Naive thymus-derived CD4-positive, alpha-beta T cell (primary cell): ENCODE measurements at regions of chr9 and their contacts with region 1.

Region 1: GRCh38 chr9:4553951-4554381 is 63.7 kb downstream of the SLC1A1 start:
- DNase-seq: no peak
- ATAC-seq: no peak
- H3K4me3 ChIP-seq: no peak overlapping the region
- H3K4me3 Mint-ChIP-seq: peak overlapping the region in 5 of 10 donors; percentile 29 to 53 (median 39)
- H3K27ac ChIP-seq: no peak overlapping the region
- H3K27ac Mint-ChIP-seq: peak overlapping the region in 5 of 9 donors; percentile 16 to 94 (median 63)
- H3K4me1 ChIP-seq: peaks cover 0 to 33% of the 10 kb centered on the region in 2 donors
- H3K4me1 Mint-ChIP-seq: peaks cover 15 to 75% (median 55%) of the 10 kb centered on the region in 7 donors
- H3K27me3 ChIP-seq: no peaks in the 10 kb centered on the region
- H3K27me3 Mint-ChIP-seq: no peaks in the 10 kb centered on the region

Region 2: GRCh38 chr9:4413856-4414455 is 140.0 kb before region 1 on chr9:
- CTCF ChIA-PET with region 1: no interaction called
- POLR2A ChIA-PET with region 1: no interaction called
- intact Hi-C with region 1: no loop called
- DNase-seq: no peak
- ATAC-seq: no peak
- H3K4me3 ChIP-seq: no peak overlapping the region
- H3K4me3 Mint-ChIP-seq: no peak overlapping the region
- H3K27ac ChIP-seq: no peak overlapping the region
- H3K27ac Mint-ChIP-seq: no peak overlapping the region
- H3K4me1 ChIP-seq: no peaks in the 10 kb centered on the region
- H3K4me1 Mint-ChIP-seq: no peaks in the 10 kb centered on the region
- H3K27me3 ChIP-seq: no peaks in the 10 kb centered on the region
- H3K27me3 Mint-ChIP-seq: peaks cover 0 to 4% (median 0%) of the 10 kb centered on the region in 5 donors

Region 3: GRCh38 chr9:4489919-4490704 is 63.9 kb before region 1 on chr9 and contains the start of gene SLC1A1:
- CTCF ChIA-PET with region 1: no interaction called
- POLR2A ChIA-PET with region 1: no interaction called
- intact Hi-C with region 1: loop called in 1 of 2 experiments (anchors 5 kb)
- DNase-seq: peak in 8 of 9 donors; percentile 8 to 36 (median 28)
- ATAC-seq: peak; percentile 50
- H3K4me3 ChIP-seq: peak within 1 kb of the TSS; percentile 70
- H3K4me3 Mint-ChIP-seq: peak within 1 kb of the TSS; percentile 72 to 92 (median 86)
- H3K27ac ChIP-seq: no peak within 1 kb of the TSS
- H3K27ac Mint-ChIP-seq: no peak within 1 kb of the TSS
- H3K4me1 ChIP-seq: peaks cover 0 to 17% of the 10 kb centered on the region in 2 donors
- H3K4me1 Mint-ChIP-seq: peaks cover 10 to 37% (median 22%) of the 10 kb centered on the region in 7 donors
- H3K27me3 ChIP-seq: peaks cover 6 to 21% of the 10 kb centered on the region in 2 donors
- H3K27me3 Mint-ChIP-seq: peaks cover 24 to 56% (median 43%) of the 10 kb centered on the region in 5 donors
- total RNA-seq, gene SLC1A1: 0.12 TPM in 1 of 5 experiments, not detected in the others

Region 4: GRCh38 chr9:4574657-4575243 is 20.8 kb after region 1 on chr9:
- CTCF ChIA-PET with region 1: interaction called, 3 read pairs
- POLR2A ChIA-PET with region 1: interaction called, 5 read pairs
- intact Hi-C with region 1: loop called in 1 of 2 experiments (anchors 1 kb)
- DNase-seq: no peak
- ATAC-seq: no peak
- H3K4me3 ChIP-seq: no peak overlapping the region
- H3K4me3 Mint-ChIP-seq: peak overlapping the region in 2 of 10 donors; percentile 3 to 33
- H3K27ac ChIP-seq: no peak overlapping the region
- H3K27ac Mint-ChIP-seq: peak overlapping the region in 4 of 9 donors; percentile 16 to 86 (median 56)
- H3K4me1 ChIP-seq: peaks cover 4 to 11% of the 10 kb centered on the region in 2 donors
- H3K4me1 Mint-ChIP-seq: peaks cover 0 to 44% (median 32%) of the 10 kb centered on the region in 7 donors
- H3K27me3 ChIP-seq: no peaks in the 10 kb centered on the region
- H3K27me3 Mint-ChIP-seq: no peaks in the 10 kb centered on the region

Region 5: DNA sequence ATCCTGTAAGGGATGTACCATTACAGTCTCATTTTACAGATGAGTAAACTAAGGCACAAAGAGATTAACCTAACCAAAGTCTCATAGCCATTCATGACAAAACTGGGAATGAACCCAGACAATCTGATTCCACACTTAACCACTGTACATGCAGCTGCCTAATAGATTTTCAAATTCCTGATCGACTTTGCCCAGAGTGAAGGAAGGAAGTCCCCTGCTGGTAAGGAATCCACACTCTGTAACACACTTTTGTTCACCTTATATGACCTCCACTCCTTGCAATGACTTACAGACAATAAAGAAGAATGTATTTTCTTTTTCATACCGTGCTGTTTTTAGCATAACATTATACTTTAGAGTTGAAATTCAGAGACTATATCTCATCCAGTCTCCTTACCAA is 76.9 kb after region 1 on chr9:
- CTCF ChIA-PET with region 1: no interaction called
- POLR2A ChIA-PET with region 1: no interaction called
- intact Hi-C with region 1: no loop called
- DNase-seq: peak in 1 of 9 donors; percentile 14
- ATAC-seq: no peak
- H3K4me3 ChIP-seq: no peak overlapping the region
- H3K4me3 Mint-ChIP-seq: no peak overlapping the region
- H3K27ac ChIP-seq: no peak overlapping the region
- H3K27ac Mint-ChIP-seq: no peak overlapping the region
- H3K4me1 ChIP-seq: no peaks in the 10 kb centered on the region
- H3K4me1 Mint-ChIP-seq: peaks cover 0 to 18% (median 6%) of the 10 kb centered on the region in 7 donors
- H3K27me3 ChIP-seq: no peaks in the 10 kb centered on the region
- H3K27me3 Mint-ChIP-seq: peaks cover 0 to 12% (median 0%) of the 10 kb centered on the region in 5 donors